HepG2 (cell line): ENCODE measurements at regions of chr10 and their contacts with region 1.

Region 1: GRCh38 chr10:117226824-117227451 is 14.0 kb upstream of the SLC18A2 start:
- DNase-seq: peak; percentile 31
- ATAC-seq: peak; percentile 84
- H3K4me3 ChIP-seq: no peak overlapping the region
- H3K27ac ChIP-seq: no peak overlapping the region
- H3K4me1 ChIP-seq: no peaks in the 10 kb centered on the region
- H3K27me3 ChIP-seq: peaks cover 0 to 2% of the 10 kb centered on the region in 2 experiments; a peak in 3 of 5 replicates
- CTCF ChIP-seq: peak; percentile 78
- EP300 ChIP-seq: no peak
- POLR2A ChIP-seq: no peak
- RAD21 ChIP-seq: peak; percentile 39; the same call in 1 of the 2 replicates

Region 2: GRCh38 chr10:117260084-117260483 is 33.1 kb after region 1 on chr10:
- CTCF ChIA-PET with region 1: no interaction called
- POLR2A ChIA-PET with region 1: no interaction called
- in situ Hi-C with region 1: no loop called
- intact Hi-C with region 1: no loop called
- DNase-seq: no peak
- ATAC-seq: no peak
- H3K4me3 ChIP-seq: no peak overlapping the region
- H3K27ac ChIP-seq: no peak overlapping the region
- H3K4me1 ChIP-seq: peaks cover 28% of the 10 kb centered on the region
- H3K27me3 ChIP-seq: peaks cover 0 to 37% of the 10 kb centered on the region in 2 experiments; a peak in 2 of 5 replicates
- CTCF ChIP-seq: no peak
- EP300 ChIP-seq: no peak
- POLR2A ChIP-seq: no peak
- RAD21 ChIP-seq: no peak

Region 3: GRCh38 chr10:117320050-117320665 is 93.2 kb after region 1 on chr10:
- CTCF ChIA-PET with region 1: interaction called, 13 read pairs
- POLR2A ChIA-PET with region 1: no interaction called
- in situ Hi-C with region 1: loop called (anchors 5 kb)
- intact Hi-C with region 1: loop called (anchors 1 kb)
- DNase-seq: peak; percentile 23
- ATAC-seq: peak; percentile 39; the same call in 1 of the 3 replicates
- H3K4me3 ChIP-seq: no peak overlapping the region
- H3K27ac ChIP-seq: no peak overlapping the region
- H3K4me1 ChIP-seq: no peaks in the 10 kb centered on the region
- H3K27me3 ChIP-seq: no peaks in the 10 kb centered on the region
- CTCF ChIP-seq: peak; percentile 59
- EP300 ChIP-seq: no peak
- POLR2A ChIP-seq: no peak
- RAD21 ChIP-seq: peak; percentile 33; the same call in 1 of the 2 replicates

Region 4: GRCh38 chr10:117442944-117443685 is 216.2 kb after region 1 on chr10:
- CTCF ChIA-PET with region 1: no interaction called
- POLR2A ChIA-PET with region 1: no interaction called
- in situ Hi-C with region 1: loop called (anchors 10 kb)
- intact Hi-C with region 1: no loop called
- DNase-seq: peak; percentile 41
- ATAC-seq: peak; percentile 92
- H3K4me3 ChIP-seq: no peak overlapping the region
- H3K27ac ChIP-seq: no peak overlapping the region
- H3K4me1 ChIP-seq: peaks cover under 1% of the 10 kb centered on the region
- H3K27me3 ChIP-seq: no peaks in the 10 kb centered on the region
- CTCF ChIP-seq: peak; percentile 83
- EP300 ChIP-seq: no peak
- POLR2A ChIP-seq: no peak
- RAD21 ChIP-seq: peak; percentile 56

Region 5: DNA sequence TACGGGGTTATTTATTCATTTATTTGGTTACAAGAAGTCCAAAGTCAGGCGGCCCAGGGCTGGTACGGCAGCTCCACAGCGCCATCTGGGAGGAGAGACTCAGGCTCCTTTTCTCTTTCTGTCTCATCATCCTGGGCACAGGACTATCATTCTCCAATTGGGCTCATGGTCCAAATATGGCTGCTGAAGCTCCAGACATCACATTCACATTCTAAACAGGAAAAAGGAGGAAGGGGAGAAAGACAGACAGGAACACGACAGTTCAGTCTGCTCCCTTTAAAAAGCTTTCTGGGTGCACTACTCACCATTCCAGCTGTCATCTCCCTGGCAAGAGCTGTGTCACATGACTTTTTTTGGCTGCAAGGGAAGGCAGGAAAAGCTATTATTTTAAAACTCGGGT is 222.7 kb after region 1 on chr10:
- CTCF ChIA-PET with region 1: interaction called, 5 read pairs
- POLR2A ChIA-PET with region 1: no interaction called
- in situ Hi-C with region 1: loop called (anchors 10 kb)
- intact Hi-C with region 1: loop called (anchors 1 kb)
- DNase-seq: no peak
- ATAC-seq: peak; percentile 80
- H3K4me3 ChIP-seq: no peak overlapping the region
- H3K27ac ChIP-seq: no peak overlapping the region
- H3K4me1 ChIP-seq: peaks cover 17% of the 10 kb centered on the region
- H3K27me3 ChIP-seq: no peaks in the 10 kb centered on the region
- CTCF ChIP-seq: peak; percentile 76
- EP300 ChIP-seq: no peak
- POLR2A ChIP-seq: no peak
- RAD21 ChIP-seq: no peak